ENCODE measurements at regions of chr4 and their contacts with region 1.

Region 1: DNA sequence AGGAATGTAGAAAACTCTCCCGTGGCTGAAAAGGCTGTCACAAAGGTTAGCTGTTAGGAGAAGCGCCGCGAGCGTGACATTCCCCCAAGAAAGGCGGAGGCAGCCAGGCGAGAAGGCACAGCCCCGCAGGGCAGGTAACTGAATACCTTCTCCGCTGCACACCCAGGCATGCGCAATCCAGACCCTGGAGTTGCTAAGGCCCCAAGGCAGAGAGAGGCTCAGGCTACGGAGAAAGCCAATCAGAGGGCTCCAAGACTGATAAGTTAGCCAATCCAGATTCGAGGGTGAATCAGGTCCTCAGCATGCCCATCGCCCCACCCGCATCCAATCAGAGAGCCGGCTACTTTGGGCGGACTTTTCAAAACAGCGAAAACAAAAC is 485 bp upstream of the CCNG2 start:
- DNase-seq: no peak
- ATAC-seq: peak; percentile 97
- H3K4me3 Mint-ChIP-seq: peak overlapping the region; percentile 95
- H3K27ac Mint-ChIP-seq: peak overlapping the region; percentile 96
- H3K4me1 Mint-ChIP-seq: peaks cover 34% of the 10 kb centered on the region
- H3K27me3 Mint-ChIP-seq: no peaks in the 10 kb centered on the region

Region 2: DNA sequence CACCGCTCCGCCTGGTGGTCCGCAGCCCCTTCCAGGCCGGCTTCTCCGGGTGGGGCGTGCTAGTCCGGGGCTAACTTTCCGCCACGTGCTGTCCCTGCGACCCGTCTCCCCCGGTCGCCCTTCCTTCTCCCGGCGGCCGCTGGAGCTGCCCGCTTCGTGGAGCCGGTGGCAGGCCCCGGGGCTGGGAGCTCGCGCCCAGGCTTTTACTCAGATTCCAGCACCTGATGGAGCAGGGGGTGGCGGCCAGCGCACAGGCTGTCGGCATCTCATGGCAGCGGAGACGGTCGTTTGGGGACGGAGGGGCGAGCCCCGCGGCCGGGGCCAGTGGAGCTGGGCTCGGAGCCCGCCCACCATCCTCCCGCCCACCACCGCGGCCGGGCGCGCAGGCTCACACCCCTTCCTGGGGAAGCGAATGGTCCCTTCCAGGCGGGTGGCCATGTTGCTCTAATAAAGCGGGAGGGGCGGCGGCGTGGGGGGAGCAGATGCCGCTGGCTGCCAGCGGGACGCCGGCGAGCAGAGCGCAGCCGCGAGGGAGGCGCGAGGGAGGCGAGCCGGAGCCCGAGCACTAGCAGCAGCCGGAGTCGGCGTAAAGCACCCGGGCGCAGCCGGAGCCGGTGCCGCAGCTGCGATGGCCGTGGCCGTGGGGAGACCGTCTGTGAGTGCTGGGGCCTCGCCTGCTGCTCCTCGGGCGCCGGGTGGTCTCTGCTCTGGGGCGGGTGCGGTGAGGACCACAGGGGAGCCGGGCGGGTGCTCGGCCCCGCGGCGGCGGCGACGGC is 207.1 kb before region 1 on chr4 and contains the start of gene SEPTIN11:
- POLR2A ChIA-PET with region 1: interaction called, 11 read pairs
- DNase-seq: peak; percentile 85
- ATAC-seq: peak; percentile 67
- H3K4me3 Mint-ChIP-seq: peak within 1 kb of the TSS; percentile 96
- H3K27ac Mint-ChIP-seq: peak within 1 kb of the TSS; percentile 77
- H3K4me1 Mint-ChIP-seq: peaks cover 20% of the 10 kb centered on the region
- H3K27me3 Mint-ChIP-seq: peaks cover 4% of the 10 kb centered on the region
- total RNA-seq, gene SEPTIN11: 51.9 to 60.0 TPM

Region 3: GRCh38 chr4:77075869-77076799 is 80.4 kb before region 1 on chr4 and contains the start of gene CCNI:
- POLR2A ChIA-PET with region 1: interaction called, 14 read pairs
- DNase-seq: peak; percentile 97
- ATAC-seq: peak; percentile 77
- H3K4me3 Mint-ChIP-seq: no peak within 1 kb of the TSS
- H3K27ac Mint-ChIP-seq: peak within 1 kb of the TSS; percentile 100
- H3K4me1 Mint-ChIP-seq: peaks cover 24% of the 10 kb centered on the region
- H3K27me3 Mint-ChIP-seq: no peaks in the 10 kb centered on the region
- total RNA-seq, gene CCNI: 243 to 244 TPM

Region 4: GRCh38 chr4:77193511-77194102 is 37.1 kb after region 1 on chr4:
- POLR2A ChIA-PET with region 1: interaction called, 14 read pairs
- DNase-seq: peak; percentile 71
- ATAC-seq: peak; percentile 100
- H3K4me3 Mint-ChIP-seq: peak overlapping the region; percentile 88
- H3K27ac Mint-ChIP-seq: peak overlapping the region; percentile 87
- H3K4me1 Mint-ChIP-seq: peaks cover 21% of the 10 kb centered on the region
- H3K27me3 Mint-ChIP-seq: peaks cover 2% of the 10 kb centered on the region

Region 5: GRCh38 chr4:77220828-77221613 is 64.5 kb after region 1 on chr4:
- POLR2A ChIA-PET with region 1: no interaction called
- DNase-seq: no peak
- ATAC-seq: no peak
- H3K4me3 Mint-ChIP-seq: no peak overlapping the region
- H3K27ac Mint-ChIP-seq: no peak overlapping the region
- H3K4me1 Mint-ChIP-seq: no peaks in the 10 kb centered on the region
- H3K27me3 Mint-ChIP-seq: peaks cover 9% of the 10 kb centered on the region